Activated B cell treated with CpG ODN at 0.5 μM for 24 hours (primary cell): ENCODE measurements at regions of chr11 and their contacts with region 1.

Region 1: GRCh38 chr11:83162377-83162776 is 5.4 kb downstream of the PCF11 start:
- DNase-seq: no peak
- ATAC-seq: peak; percentile 41
- H3K4me3 Mint-ChIP-seq: peak overlapping the region; percentile 64
- H3K27ac Mint-ChIP-seq: peak overlapping the region; percentile 56
- H3K4me1 Mint-ChIP-seq: peaks cover 61% of the 10 kb centered on the region
- H3K27me3 Mint-ChIP-seq: no peaks in the 10 kb centered on the region
- CTCF ChIP-seq: no peak

Region 2: DNA sequence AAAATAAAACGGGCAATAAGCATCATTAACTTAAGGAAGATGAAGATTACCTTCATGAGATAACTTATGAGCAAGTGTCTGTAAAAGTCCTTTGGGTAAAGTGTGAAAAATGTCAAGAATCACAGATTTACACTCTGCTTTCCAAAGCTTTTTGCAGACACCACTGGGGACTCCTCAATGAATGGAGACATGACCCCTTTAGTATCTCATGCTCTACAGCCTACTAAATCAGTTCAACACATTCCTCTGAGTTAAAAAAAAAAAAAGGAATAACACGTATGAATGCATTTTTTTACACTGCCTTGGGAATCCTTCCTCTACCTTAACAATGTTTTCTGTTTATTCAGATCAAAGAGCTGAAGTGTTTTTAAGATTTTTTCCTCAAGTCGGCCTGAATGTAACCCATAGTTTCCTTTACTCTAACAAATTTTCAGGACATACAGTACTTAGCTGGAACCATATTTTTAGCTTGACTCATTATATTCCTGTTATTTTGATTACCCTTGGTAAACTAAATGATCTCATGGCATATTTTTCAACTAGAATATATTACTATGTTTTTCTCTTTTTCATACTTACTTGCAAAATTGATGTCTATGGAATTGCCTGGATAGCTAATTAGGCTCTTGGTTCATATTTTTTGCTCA is 64.8 kb before region 1 on chr11:
- CTCF ChIA-PET with region 1: no interaction called
- POLR2A ChIA-PET with region 1: no interaction called
- intact Hi-C with region 1: no loop called
- DNase-seq: no peak
- ATAC-seq: no peak
- H3K4me3 Mint-ChIP-seq: no peak overlapping the region
- H3K27ac Mint-ChIP-seq: no peak overlapping the region
- H3K4me1 Mint-ChIP-seq: peaks cover 10% of the 10 kb centered on the region
- H3K27me3 Mint-ChIP-seq: no peaks in the 10 kb centered on the region
- CTCF ChIP-seq: no peak

Region 3: DNA sequence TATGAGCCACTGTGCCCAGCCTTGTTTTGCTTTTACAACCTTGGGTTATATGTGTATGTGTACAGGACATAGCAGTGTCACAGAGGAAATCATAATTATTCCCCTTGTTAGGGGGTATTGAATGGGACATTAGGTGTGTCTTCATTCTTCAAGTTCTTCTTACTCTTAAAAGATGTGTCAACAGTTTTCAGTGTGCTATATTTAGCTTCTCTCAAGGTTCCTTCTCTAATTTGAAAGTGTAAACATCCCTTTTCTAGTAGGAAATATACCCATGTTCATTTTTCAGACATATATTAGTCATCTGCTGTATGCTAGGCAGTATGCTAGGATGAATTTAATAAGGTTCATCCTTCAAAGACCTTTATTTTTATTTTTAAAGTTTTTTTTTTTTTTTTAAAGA is 11.6 kb after region 1 on chr11:
- CTCF ChIA-PET with region 1: no interaction called
- POLR2A ChIA-PET with region 1: interaction called, 7 read pairs
- intact Hi-C with region 1: loop called (anchors 1 kb)
- DNase-seq: no peak
- ATAC-seq: peak; percentile 43
- H3K4me3 Mint-ChIP-seq: peak overlapping the region; percentile 55
- H3K27ac Mint-ChIP-seq: peak overlapping the region; percentile 35
- H3K4me1 Mint-ChIP-seq: peaks cover 71% of the 10 kb centered on the region
- H3K27me3 Mint-ChIP-seq: no peaks in the 10 kb centered on the region
- CTCF ChIP-seq: no peak